HEK293T (cell line): ENCODE measurements at regions of chr20 and their contacts with region 1.

Region 1: GRCh38 chr20:31723319-31724078 is 831 bp upstream of the BCL2L1 start:
- DNase-seq: peak; percentile 98

Region 2: DNA sequence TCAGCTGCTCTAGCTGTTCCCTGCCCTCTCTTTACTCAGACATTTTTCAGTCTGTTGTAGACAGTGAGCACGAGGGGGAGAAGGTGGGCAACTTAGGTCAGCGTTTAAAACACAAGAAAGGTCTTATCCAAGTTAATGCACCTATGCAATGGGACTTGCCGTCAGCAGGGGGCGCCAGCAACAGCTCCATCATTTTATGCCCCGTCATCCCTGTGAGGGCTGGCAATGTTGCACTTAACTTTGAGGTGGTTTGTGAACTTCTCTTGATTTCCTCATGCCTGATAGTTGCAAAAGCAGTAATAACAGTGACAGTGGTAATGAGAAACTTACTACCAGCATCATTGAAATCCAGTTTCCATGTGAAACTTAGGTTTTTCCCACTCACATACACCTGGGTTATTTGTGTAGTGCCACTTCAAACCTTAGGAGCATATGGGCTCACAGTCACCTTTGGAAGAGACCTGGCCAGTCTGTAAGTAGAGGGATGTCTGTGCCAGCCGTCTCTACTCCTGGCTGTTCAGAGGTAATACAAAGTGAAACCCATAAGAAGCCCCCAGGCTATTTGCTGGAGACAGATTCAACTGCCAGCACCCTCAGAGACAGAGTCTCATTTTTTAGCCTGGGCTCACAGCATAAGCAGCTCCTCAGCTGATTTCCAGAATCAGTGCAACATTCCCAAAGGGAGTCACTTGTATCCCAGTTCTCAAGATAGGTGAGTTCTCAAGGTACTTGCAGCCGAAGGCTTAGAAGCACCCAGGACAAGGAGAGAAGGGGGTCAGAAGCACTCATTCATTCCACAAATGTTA is 163.2 kb before region 1 on chr20:
- CTCF ChIA-PET with region 1: interaction called, 13 read pairs
- POLR2A ChIA-PET with region 1: no interaction called
- DNase-seq: peak; percentile 70

Region 3: DNA sequence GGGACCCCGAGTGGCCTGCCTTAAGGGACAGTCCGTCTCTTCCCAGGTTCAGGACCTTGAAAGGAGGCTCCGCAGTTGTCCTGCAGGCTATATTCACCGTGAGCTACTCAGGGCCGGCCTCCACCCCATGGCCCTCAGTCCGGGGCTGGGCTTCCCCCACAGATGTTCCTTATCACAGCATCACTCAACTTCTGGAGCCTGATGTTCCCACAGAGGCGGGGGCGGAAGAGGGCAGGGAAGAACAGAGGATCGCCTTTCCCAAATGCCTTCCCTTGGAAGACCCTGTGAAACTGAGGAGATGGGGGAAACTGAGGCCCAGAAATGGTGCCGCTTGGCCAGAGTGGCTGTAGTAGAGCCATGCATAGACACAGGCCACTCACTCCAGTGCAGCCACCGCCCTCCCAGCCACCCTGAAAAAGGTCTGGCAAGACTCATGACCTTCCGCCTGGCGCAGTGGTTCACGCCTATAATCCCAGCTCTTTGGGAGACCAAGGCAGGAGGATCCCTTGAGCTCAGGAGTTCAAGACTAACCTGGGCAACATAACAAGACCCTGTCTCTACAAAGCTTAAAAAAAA is 90.1 kb before region 1 on chr20:
- CTCF ChIA-PET with region 1: interaction called, 28 read pairs
- POLR2A ChIA-PET with region 1: interaction called, 22 read pairs
- DNase-seq: no peak

Region 4: DNA sequence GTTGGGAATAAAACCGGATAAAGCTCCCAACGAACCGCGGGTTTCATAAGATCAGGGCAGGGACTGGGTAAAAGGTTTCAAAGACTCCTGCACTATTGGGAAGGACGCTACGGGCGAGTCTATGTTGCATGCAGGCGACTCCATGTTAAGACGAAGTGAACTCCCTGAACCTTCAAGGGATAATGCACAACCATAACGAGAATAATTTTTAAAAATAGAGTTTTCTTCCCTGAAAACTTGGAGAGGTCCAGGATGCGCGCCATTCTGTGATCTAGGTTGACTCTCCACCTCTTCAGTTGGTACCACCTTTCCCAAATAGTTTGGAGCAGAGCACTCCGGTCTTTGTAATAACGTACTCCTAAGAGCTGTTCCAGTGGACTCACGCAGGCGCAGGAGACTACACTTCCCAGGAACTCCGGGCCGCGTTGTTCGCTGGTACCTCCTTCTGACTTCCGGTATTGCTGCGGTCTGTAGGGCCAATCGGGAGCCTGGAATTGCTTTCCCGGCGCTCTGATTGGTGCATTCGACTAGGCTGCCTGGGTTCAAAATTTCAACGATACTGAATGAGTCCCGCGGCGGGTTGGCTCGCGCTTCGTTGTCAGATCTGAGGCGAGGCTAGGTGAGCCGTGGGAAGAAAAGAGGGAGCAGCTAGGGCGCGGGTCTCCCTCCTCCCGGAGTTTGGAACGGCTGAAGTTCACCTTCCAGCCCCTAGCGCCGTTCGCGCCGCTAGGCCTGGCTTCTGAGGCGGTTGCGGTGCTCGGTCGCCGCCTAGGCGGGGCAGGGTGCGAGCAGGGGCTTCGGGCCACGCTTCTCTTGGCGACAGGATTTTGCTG is 15.4 kb after region 1 on chr20 and contains the start of gene TPX2:
- CTCF ChIA-PET with region 1: interaction called, 8 read pairs
- POLR2A ChIA-PET with region 1: interaction called, 16 read pairs
- DNase-seq: peak; percentile 98

Region 5: DNA sequence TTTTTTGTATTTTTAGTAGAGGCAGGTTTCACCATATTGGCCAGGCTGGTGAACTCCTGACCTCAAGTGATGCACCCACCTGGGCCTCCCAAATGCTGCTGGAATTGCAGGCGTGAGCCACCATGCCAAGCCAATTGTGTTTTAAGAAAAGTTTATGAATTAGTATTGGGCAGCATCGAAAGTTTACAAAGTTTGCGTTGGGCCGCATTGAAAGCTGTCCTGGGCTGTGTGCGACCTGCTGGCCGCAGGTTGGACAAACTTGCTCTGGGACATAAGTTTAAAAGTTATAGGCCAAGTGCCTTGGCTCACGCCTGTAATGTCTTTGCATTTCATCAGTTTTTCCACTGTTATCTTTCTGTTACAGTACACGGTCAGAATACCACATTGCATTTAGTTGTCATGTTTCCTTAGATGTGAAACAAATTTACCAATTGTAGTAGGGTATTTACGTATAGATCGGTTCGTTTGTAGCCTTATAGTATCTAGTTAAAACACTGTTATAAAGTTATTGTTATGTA is 674.1 kb after region 1 on chr20:
- CTCF ChIA-PET with region 1: no interaction called
- POLR2A ChIA-PET with region 1: no interaction called
- DNase-seq: no peak